K562 (cell line): ENCODE measurements at regions of chr19 and their contacts with region 1.

Region 1: GRCh38 chr19:40410030-40410389 is 3.2 kb downstream of the PRX start:
- DNase-seq: no peak
- ATAC-seq: no peak
- H3K4me3 ChIP-seq: no peak overlapping the region
- H3K27ac ChIP-seq: no peak overlapping the region
- H3K4me1 ChIP-seq: peaks cover 18 to 50% of the 10 kb centered on the region in 2 experiments; a peak in 4 of 5 replicates
- H3K27me3 ChIP-seq: no peaks in the 10 kb centered on the region
- CTCF ChIP-seq: no peak
- EP300 ChIP-seq: no peak
- POLR2A ChIP-seq: no peak
- RAD21 ChIP-seq: no peak

Region 2: DNA sequence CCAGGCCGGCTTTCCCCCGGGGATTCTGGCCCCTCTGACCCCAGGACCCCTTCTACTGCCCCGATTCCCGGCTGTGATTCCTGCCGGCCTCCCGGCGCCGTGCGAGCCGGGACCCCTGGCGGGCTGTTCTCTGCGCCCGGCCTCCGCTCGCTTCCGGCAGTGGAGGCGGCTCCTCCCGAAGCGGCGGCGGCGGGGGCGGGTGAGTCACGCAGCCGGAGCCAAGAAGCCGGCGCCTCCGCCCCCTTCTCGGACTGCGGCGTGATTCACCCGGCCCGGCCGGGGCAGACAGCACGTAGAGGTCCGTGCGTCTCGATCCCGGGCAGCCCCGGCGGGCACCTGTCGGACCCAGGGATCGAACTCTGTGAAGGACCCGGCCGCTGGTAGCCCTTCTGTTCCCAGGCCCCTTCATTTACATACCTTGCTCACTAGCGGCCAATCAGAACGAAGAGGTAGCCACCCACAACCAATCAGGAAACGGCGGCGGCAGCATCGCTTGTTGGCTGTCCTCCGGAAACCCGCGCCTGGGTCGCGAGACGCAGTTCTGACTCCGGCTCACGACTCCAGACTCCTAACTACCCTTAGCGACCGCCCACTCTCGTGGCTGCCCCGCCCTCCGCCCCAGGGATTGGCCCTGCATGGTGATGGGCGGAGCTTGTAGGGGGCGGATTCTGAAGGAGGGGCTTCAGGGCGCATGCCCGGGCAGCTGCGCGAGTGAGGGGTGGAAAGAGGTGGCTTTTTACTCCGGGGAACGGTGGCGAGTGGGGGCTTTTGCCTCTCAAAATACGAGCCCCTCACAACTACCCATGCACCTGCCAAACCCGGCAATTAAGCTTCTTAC is 15.7 kb after region 1 on chr19 and contains the start of gene SERTAD1:
- CTCF ChIA-PET with region 1: no interaction called
- POLR2A ChIA-PET with region 1: interaction called, 10 read pairs
- in situ Hi-C with region 1: no loop called
- intact Hi-C with region 1: no loop called
- DNase-seq: peak; percentile 97 to 100 (median 98)
- ATAC-seq: peak; percentile 88
- H3K4me3 ChIP-seq: peak within 1 kb of the TSS; percentile 80
- H3K27ac ChIP-seq: peak within 1 kb of the TSS; percentile 90
- H3K4me1 ChIP-seq: peaks cover 9 to 34% of the 10 kb centered on the region in 2 experiments; a peak in 4 of 5 replicates
- H3K27me3 ChIP-seq: no peaks in the 10 kb centered on the region
- CTCF ChIP-seq: peak; percentile 50 to 65 (median 58); a peak in 5 of 6 replicates
- EP300 ChIP-seq: no peak
- POLR2A ChIP-seq: peak; percentile 97
- RAD21 ChIP-seq: peak in 1 of 2 experiments; percentile 18; a peak in 2 of 4 replicates
- polyA plus RNA-seq, gene SERTAD1: 0.15 to 0.85 TPM